A673 (cell line): ENCODE measurements at regions of chr2 and their contacts with region 1.

Region 1: DNA sequence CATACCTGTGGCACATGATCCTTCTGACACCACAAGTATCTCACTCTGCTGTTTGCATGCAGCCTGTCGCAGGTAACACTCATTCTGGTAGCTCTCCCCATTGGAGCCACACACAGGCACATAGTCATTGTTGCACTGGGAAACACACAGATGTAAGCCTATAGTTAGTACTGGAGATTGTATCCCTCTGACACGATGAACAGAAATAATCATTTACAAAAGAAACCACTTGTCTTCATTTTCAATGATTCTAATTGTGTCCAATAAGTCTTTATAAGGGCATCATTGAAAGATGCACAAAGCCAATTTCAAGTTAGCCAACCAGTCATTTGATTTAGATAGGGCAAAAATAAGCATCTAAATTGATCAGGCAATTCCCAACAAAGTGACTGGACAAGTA is 10.4 kb downstream of the TMEFF2 start:
- DNase-seq: no peak
- H3K4me3 ChIP-seq: no peak overlapping the region
- H3K27ac ChIP-seq: no peak overlapping the region
- H3K4me1 ChIP-seq: no peaks in the 10 kb centered on the region
- H3K27me3 ChIP-seq: no peaks in the 10 kb centered on the region
- CTCF ChIP-seq: no peak

Region 2: DNA sequence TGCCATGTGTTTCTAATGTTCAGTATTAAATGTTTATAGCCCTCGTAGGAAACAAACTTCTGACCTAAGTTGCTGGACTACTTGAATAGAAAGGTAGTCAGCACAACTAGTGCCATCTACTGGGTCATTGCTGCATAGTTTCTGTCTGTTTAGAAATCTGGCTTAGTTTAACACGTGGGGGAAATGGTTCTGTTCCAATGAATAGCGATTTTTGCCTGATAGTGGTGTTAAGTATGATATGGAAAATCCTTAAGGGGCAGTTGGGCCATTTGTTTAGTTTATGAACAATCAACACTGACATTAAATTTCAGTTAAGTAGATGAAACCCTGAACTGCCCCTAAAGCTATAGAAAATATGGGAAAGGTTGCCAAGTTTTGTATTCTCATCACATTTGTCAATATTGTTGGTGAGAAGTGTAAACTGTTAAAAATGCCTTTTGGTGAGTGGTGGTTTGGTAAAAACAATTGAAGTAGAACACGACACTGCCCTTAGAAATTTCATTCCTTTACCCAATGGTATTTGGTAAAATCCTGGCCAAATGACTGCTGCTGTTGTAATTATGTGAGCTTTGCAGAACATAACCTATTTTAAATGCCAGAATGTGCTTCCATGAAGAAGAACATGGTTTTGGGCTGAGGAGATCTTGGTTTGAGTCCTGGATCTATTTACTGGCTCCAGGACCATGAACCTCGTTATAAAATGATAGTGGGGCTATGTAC is 493.2 kb before region 1 on chr2:
- CTCF ChIA-PET with region 1: no interaction called
- POLR2A ChIA-PET with region 1: no interaction called
- intact Hi-C with region 1: loop called (anchors 10 kb)
- DNase-seq: peak; percentile 86
- H3K4me3 ChIP-seq: no peak overlapping the region
- H3K27ac ChIP-seq: no peak overlapping the region
- H3K4me1 ChIP-seq: peaks cover 16% of the 10 kb centered on the region
- H3K27me3 ChIP-seq: no peaks in the 10 kb centered on the region
- CTCF ChIP-seq: peak; percentile 87

Region 3: DNA sequence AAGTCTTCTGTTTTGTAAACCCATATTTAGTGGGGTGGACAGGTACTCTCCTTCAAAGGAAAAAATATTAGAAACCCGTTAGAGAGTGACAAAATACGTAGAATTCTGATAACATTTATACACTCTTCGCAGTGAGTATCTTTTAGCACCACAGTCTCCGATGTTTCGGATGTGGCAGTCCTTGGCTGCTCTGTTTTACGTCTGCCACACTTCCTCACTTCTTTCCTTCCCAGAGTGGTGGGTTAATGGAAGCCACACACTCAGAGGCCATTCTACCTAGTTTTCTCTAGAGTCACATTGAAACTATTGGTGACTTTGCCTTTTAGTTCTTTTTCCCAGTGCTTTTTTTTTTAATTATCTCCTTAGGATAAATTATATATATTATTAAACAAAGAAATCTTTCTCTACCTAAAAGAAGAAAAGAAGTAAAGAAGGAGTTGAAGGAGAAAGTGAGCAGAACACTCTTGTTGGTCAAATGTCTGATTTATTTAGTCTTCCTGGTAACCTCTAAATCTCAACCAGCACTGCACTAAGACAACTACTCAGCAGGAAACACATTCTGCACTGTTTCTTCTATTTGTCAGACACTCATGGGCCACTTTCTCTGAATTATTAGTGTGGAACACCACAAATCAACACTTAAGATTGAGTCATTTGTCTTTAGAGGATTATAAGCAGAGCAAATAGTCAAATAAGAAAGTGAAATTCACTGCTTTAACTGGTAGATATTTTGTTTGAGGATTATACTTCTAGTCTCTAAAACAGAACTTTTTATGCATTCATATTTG is 461.7 kb after region 1 on chr2:
- CTCF ChIA-PET with region 1: no interaction called
- POLR2A ChIA-PET with region 1: no interaction called
- intact Hi-C with region 1: no loop called
- DNase-seq: no peak
- H3K4me3 ChIP-seq: no peak overlapping the region
- H3K27ac ChIP-seq: no peak overlapping the region
- H3K4me1 ChIP-seq: no peaks in the 10 kb centered on the region
- H3K27me3 ChIP-seq: no peaks in the 10 kb centered on the region
- CTCF ChIP-seq: no peak